Activated CD4-positive, alpha-beta memory T cell treated with anti-CD3 and anti-CD28 coated beads, Interleukin-2, amount 10 ng/mL, durations not matched to agents 7 days and 5 days (primary cell): ENCODE measurements at regions of chr20 and their contacts with region 1.

Region 1: GRCh38 chr20:5100684-5101347 is 18.9 kb downstream of the PCNA start:
- DNase-seq: peak; percentile 77
- H3K4me3 Mint-ChIP-seq: no peak overlapping the region
- H3K27ac Mint-ChIP-seq: no peak overlapping the region
- H3K4me1 Mint-ChIP-seq: peaks cover 12% of the 10 kb centered on the region
- H3K27me3 Mint-ChIP-seq: no peaks in the 10 kb centered on the region

Region 2: DNA sequence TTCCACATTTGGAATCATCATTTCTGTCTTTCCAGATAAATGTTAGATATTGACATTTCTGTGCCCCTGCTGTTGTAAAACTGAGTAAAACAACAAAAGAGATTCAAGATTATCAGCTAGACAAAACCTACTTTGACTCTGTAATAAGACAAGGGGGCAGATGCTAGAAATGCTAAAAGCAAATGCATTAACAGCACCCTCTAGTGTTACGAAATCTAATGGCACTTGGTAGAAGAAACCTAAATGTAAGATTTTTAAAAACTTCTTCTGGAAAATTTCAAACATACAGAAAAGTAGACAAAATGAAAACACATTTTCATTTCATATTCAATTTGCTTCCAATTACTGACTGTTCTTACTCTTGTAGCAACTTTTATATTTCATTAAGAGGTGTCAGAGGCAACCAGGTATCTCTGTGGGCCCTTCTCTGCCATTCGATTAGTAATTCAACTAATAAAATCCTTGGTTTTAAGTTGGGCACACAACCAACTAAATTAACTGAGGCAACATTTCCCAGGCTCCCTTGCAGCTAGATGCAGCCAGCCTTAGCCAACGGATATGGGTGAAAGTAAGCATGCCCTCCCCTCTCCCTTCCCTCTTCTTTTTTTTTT is 144.5 kb before region 1 on chr20:
- CTCF ChIA-PET with region 1: interaction called, 23 read pairs
- POLR2A ChIA-PET with region 1: no interaction called
- DNase-seq: no peak
- H3K4me3 Mint-ChIP-seq: no peak overlapping the region
- H3K27ac Mint-ChIP-seq: no peak overlapping the region
- H3K4me1 Mint-ChIP-seq: peaks cover 9% of the 10 kb centered on the region
- H3K27me3 Mint-ChIP-seq: no peaks in the 10 kb centered on the region

Region 3: GRCh38 chr20:5001174-5002076 is 99.4 kb before region 1 on chr20 and contains the start of gene SLC23A2:
- CTCF ChIA-PET with region 1: interaction called, 15 read pairs
- POLR2A ChIA-PET with region 1: no interaction called
- DNase-seq: peak; percentile 64
- H3K4me3 Mint-ChIP-seq: peak within 1 kb of the TSS; percentile 93
- H3K27ac Mint-ChIP-seq: peak within 1 kb of the TSS; percentile 76
- H3K4me1 Mint-ChIP-seq: peaks cover 26% of the 10 kb centered on the region
- H3K27me3 Mint-ChIP-seq: peaks cover 12% of the 10 kb centered on the region
- total RNA-seq, gene SLC23A2: 12.9 to 14.1 TPM

Region 4: DNA sequence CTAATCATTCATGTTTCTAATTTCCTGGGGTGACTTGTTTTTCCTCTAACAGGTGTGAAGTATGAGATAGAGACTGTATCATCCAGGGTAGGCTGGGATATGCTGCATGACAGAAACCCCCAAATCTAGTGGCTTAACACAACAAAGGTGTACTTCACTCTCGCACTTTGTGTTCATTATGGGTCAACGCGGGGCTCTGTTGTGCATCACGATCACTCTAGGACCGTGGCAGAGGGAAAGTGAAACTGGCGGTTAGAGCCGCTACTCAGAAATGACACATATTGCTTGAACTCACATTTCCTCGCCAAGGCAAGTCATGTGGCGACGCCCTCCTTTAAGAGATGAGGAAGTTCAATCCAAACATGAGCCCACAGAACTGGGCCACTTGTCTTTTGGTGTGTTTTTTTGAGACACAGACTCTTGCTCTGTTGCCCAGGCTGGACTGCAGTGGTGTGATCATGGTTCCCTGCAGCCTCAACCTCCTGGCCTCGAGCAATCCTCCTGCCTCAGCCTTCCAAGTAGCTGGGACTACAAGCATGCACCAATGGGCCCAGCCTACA is 22.3 kb before region 1 on chr20:
- CTCF ChIA-PET with region 1: interaction called, 30 read pairs
- POLR2A ChIA-PET with region 1: interaction called, 4 read pairs
- DNase-seq: peak; percentile 90
- H3K4me3 Mint-ChIP-seq: peak overlapping the region; percentile 68
- H3K27ac Mint-ChIP-seq: peak overlapping the region; percentile 97
- H3K4me1 Mint-ChIP-seq: peaks cover 54% of the 10 kb centered on the region
- H3K27me3 Mint-ChIP-seq: no peaks in the 10 kb centered on the region

Region 5: GRCh38 chr20:5090191-5090590 is 10.6 kb before region 1 on chr20:
- CTCF ChIA-PET with region 1: interaction called, 12 read pairs
- POLR2A ChIA-PET with region 1: interaction called, 3 read pairs
- DNase-seq: peak; percentile 27
- H3K4me3 Mint-ChIP-seq: no peak overlapping the region
- H3K27ac Mint-ChIP-seq: peak overlapping the region; percentile 67
- H3K4me1 Mint-ChIP-seq: peaks cover 16% of the 10 kb centered on the region
- H3K27me3 Mint-ChIP-seq: no peaks in the 10 kb centered on the region